Right ventricle myocardium inferior (tissue), 1 donor: ENCODE measurements at regions of chr7 and their contacts with region 1.

Region 1: DNA sequence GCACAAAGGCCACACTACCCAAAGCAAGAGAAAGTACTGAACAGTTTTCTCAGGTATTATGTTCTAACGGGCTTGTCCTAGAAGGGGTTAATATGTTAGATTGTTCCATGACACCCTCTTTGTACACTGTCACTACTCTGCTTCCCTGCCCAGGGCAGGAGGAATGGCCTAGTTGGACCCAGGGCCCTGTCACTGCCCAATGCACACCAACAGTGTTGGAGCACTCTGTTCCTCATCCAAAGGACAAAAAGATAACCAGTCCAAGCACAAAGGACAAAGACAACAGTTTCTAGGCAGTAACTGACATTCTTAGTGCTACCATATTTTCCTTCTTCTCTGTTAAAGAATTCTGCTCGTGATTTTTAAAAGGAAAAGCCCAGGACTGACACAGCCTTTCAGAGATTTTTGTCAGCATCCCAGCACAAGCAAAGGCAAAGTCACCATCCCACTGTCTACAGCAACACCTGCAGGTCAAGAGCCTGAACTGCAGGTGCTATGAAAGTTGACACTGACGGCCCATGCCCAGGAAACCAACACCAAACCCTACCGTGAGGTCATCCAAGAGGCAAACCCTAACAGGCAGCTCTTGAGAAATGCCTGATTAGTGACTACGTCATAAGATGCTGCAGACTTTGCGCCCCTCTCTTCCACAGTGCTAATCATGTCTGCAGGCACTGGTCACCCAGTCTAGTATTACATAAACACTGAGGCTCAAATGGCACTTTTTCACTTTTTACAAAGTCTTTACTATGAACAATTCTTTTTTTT is 13.2 kb downstream of the NUDCD3 start:
- DNase-seq: no peak
- ATAC-seq: peak; percentile 84

Region 2: DNA sequence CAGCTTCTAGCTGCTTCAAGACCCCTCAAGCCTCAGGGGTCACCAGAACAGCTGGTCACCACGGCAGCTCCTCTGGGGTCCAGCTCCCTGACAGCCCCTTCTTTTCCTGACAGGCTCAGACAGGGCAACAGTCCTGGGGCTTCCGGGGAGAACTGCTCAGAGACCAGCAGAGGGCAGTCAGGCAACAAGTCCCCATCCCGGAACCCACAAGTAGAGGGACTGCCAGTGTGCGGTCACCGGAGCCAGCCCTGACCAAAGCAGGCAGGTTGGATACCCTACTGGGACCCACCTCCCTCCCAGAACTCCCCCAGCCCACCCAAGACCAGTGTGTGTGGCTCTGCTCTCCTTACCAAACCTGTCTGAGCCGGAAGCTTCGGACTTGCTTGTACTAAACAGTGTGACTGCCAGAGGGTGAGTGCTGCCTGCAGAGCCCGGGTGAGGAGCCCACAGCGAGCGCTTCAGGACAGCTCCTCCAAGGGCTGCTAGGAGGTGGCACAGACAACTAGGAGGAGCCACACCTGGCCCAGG is 236.2 kb before region 1 on chr7:
- intact Hi-C with region 1: loop called (anchors 2 kb)
- DNase-seq: no peak
- ATAC-seq: peak; percentile 84

Region 3: GRCh38 chr7:44257618-44258422 is 219.4 kb before region 1 on chr7:
- intact Hi-C with region 1: no loop called
- DNase-seq: peak; percentile 83
- ATAC-seq: peak; percentile 85

Region 4: DNA sequence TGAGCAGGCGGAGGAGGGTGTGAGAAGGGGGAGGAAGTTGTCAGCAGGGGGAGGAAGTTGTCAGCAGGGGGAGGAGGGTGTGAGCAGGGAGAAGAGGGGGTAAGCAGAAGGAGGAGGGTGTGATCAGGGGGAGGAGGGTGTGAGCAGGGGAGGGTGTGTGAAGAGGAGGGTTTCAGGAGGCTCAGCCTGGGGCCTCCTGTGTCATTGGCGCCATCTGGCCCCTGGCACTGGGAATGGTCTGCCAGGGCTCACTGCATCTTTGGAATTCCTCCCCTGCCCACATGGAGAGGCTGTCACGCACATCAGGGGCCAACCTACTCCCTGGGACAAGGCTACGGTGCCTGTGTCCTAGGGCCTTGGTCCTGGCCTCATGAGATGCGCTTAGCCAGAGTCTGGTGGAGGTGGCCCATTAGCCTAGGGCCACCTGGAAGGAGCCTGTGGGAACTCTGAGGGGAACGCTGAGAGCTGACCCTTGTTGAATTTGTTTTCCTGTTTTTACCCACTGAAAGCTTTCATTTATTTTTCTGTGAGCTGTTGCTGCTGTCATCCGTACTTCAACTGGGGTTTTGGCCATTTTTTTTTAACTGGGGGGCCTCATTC is 169.8 kb before region 1 on chr7:
- intact Hi-C with region 1: no loop called
- DNase-seq: peak; percentile 73
- ATAC-seq: peak; percentile 68

Region 5: DNA sequence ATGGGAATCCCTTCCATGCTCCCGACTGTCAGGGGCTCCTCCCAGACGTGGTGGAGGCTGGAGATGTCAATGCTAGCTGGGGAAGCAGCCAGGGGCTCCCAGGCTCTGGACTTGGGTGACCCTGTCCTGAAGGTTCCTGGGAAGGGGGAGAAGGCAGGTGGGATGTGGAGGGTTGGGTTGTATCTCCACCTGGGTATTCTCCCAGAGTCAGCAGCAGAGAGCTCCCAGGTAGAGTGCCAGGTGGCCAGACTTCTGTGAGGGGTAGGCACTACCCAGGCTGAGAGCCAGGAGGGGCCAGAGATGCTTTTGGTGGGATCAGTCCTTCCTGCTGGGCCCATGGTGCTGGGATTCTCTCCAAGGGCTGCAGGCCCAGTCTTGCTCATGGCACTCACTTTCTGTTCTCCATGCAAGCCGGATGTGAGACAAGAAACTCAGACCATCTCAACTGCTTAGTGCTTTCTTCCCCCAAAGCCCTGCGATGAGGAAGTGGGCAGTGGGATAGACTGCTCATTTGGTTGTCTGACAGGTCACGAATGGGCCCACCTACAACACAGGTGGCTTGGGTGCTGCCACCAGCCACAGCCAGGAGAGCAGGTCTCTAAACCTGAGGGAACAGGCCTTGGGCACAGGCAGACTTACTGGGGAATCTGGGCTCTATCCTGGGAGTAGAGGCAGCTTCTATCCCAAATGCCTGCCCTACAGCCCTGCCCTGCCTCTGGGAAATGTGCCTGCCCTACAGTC is 99.4 kb before region 1 on chr7:
- intact Hi-C with region 1: loop called (anchors 2 kb)
- DNase-seq: no peak
- ATAC-seq: no peak

Region 6: DNA sequence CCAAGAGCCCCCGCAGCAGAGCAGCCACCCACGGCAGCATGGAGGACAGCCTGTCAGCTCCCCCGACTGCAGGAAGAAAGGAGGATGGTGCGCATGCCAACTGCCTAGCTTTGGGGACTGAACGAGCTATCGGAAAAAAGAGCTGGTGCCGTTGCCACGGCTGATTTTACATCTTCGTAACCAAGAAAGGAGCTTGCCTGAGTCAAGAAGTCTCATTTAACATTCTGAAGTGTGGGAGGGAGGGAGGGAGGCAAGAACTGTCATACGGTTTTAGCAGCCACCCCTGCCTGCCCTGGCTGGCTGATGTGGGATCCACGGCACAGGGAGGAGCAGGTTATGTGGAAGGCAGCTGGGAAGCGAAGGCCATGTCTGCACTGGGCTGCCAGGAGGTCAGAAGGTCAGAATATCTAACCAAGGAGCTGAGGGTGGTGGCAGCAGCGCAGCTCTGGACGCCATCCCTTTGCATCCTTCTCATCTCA is 77.2 kb before region 1 on chr7:
- intact Hi-C with region 1: loop called (anchors 5 kb)
- DNase-seq: no peak
- ATAC-seq: no peak

Region 7: DNA sequence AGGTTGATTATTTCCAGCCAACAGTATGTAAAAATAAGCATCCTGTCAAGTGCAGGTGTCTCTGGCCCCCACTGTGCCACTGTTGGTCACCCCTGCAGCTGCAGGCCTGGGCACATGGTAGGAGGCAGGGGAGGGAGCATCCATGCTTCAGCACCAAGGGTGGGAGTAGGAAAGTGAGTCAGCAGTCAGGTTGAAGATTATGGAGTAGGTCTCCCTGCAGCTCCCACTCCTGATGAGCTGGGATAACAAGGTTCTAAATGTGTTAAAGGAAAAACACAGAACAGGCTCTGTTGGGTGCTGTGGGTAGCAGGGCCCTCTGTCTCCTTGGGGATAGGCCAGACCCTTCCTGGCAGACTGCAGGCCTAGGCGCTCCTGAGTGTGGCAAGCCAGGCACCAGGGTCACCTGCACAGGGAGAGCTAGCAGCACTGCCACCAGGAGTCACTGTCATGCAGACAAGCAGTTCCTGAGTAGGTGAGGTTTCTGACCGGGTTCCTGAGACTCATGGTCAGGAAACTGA is 46.1 kb before region 1 on chr7:
- intact Hi-C with region 1: loop called (anchors 5 kb)
- DNase-seq: no peak
- ATAC-seq: peak; percentile 40

Region 8: DNA sequence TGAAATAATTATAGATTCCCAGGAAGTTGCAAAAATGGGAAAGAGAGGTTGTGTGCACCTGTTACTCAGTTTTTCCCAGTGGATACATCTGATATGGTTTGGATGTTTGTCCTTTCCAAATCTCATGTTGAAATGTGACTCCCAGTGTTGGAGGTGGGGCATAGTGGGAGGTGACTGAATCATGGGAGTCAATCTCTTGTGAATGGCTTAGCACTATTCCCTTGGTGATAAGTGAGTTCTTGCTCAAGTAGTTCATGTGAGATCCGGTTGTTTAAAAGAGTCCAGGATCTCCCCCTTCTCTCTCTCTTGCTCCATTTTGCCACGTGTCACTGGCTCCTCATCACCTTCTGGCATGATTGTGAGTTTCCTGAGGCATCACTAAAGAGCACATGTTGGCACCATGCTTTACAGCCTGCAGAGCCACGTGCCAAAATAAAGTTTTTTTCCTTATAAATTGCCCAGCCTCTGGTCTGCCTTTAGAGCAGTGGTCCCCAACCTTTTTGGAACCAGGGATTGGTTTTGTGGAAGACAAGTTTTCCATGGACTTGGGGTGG is 829.6 kb after region 1 on chr7:
- intact Hi-C with region 1: no loop called
- DNase-seq: no peak
- ATAC-seq: peak; percentile 73